Activated CD8-positive, alpha-beta T cell treated with anti-CD3 and anti-CD28 coated beads, Interleukin-2, amount 10 ng/mL, durations not matched to agents 7 days and 5 days (primary cell): ENCODE measurements at regions of chr6 and their contacts with region 1.

Region 1: GRCh38 chr6:391559-392440 is at the start of gene IRF4:
- DNase-seq: peak; percentile 77
- ATAC-seq: peak; percentile 55
- H3K4me3 Mint-ChIP-seq: peak within 1 kb of the TSS; percentile 86
- H3K27ac Mint-ChIP-seq: peak within 1 kb of the TSS; percentile 94
- H3K4me1 Mint-ChIP-seq: peaks cover 51% of the 10 kb centered on the region
- H3K27me3 Mint-ChIP-seq: no peaks in the 10 kb centered on the region
- total RNA-seq, gene IRF4: 91.2 to 95.2 TPM

Region 2: GRCh38 chr6:181049-181654 is 210.6 kb before region 1 on chr6:
- CTCF ChIA-PET with region 1: interaction called, 85 read pairs
- POLR2A ChIA-PET with region 1: interaction called, 10 read pairs
- DNase-seq: no peak
- ATAC-seq: no peak
- H3K4me3 Mint-ChIP-seq: peak overlapping the region; percentile 6
- H3K27ac Mint-ChIP-seq: peak overlapping the region; percentile 78
- H3K4me1 Mint-ChIP-seq: peaks cover 33% of the 10 kb centered on the region
- H3K27me3 Mint-ChIP-seq: peaks cover 3% of the 10 kb centered on the region

Region 3: GRCh38 chr6:291697-292505 is 99.9 kb before region 1 on chr6 and contains the start of gene DUSP22:
- CTCF ChIA-PET with region 1: interaction called, 3 read pairs
- POLR2A ChIA-PET with region 1: interaction called, 29 read pairs
- DNase-seq: peak; percentile 90
- ATAC-seq: peak; percentile 75
- H3K4me3 Mint-ChIP-seq: peak within 1 kb of the TSS; percentile 86
- H3K27ac Mint-ChIP-seq: peak within 1 kb of the TSS; percentile 97
- H3K4me1 Mint-ChIP-seq: peaks cover 67% of the 10 kb centered on the region
- H3K27me3 Mint-ChIP-seq: no peaks in the 10 kb centered on the region
- total RNA-seq, gene DUSP22: 32.6 to 33.2 TPM

Region 4: GRCh38 chr6:436308-437036 is 44.7 kb after region 1 on chr6:
- CTCF ChIA-PET with region 1: interaction called, 8 read pairs
- POLR2A ChIA-PET with region 1: interaction called, 12 read pairs
- DNase-seq: no peak
- ATAC-seq: no peak
- H3K4me3 Mint-ChIP-seq: no peak overlapping the region
- H3K27ac Mint-ChIP-seq: peak overlapping the region; percentile 39
- H3K4me1 Mint-ChIP-seq: peaks cover 45% of the 10 kb centered on the region
- H3K27me3 Mint-ChIP-seq: peaks cover 2% of the 10 kb centered on the region

Region 5: DNA sequence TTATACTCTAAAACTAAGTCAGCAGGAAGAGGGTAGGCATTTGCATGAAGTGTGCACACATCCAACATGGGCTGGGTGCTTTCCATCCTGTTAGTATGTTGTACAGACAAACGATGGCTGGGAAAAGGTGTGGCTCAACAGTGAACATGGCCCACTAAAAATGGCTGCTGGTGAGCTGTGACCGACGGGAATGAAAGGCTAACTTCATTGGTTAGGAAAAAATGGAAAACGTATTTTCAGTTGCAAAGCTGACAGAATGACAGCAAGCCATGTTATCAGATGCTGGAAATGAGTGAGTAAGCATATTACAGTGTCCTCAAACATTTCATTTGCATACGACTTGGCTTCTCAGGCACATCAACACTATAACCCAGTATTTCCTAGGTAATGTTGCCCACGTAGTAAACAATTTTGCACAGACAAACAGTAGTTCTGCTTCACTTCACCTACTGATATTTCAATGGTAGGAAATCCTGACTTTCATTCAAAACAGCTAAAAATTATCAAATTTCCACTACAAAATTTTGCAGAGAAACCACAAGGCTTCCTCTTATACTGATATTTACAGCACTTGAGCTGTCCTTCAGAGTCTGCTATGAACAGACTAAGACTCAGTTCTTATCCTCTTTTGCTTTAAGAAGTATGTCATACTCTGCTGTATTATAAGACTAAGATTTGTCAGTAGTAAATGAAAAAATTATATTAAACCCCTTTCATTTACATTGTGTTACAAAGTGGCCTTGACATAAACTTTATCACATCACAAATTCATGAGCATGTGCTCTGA is 98.6 kb after region 1 on chr6:
- CTCF ChIA-PET with region 1: interaction called, 20 read pairs
- POLR2A ChIA-PET with region 1: interaction called, 51 read pairs
- DNase-seq: peak; percentile 38
- ATAC-seq: peak; percentile 58
- H3K4me3 Mint-ChIP-seq: peak overlapping the region; percentile 64
- H3K27ac Mint-ChIP-seq: peak overlapping the region; percentile 93
- H3K4me1 Mint-ChIP-seq: peaks cover 76% of the 10 kb centered on the region
- H3K27me3 Mint-ChIP-seq: no peaks in the 10 kb centered on the region

Region 6: DNA sequence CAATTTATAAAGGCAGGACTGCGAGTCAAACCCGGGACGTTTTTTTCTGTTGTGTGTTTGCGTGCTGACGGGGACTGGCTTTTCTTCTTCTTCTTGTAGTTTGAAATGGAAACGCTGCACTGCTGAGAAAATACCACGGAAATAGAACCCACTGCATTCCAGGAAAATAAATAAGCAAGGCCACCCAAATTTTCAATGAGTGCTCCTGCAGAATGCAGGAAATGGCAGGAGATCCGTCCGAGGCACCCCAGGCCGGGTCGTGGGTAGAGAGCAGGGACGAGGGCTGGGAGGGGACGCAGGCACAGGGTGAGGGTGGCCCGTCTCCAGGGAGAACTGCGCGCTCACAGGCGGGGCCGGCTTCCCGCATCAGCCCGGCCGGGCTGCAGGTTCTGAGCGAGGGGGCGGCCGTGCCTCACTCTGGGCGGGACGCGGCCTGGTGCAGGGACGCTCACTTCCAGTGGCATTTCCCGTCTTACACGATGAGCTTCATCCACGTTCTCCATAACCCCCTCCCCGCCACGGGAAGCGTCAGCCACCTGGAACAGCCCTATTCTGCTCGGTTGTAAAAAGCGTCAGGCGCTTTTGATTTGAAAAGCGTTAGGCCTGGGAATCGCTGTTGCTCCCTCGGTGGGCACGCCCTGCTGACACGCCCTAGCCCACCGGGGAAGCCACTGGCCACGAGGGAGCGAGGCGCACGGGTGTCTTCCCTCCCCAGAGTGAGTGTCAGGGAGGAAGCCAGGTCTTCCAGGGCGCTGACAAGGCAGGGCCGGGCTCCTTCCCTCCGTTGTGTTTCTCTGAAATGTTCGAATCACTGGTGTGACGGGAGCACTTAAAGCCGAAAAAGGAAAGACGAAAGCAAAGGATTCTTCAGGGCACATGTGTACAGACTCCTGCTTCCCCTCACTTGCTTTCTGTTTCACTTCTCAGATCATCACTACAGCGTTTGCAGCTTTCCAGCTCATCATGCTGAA is 319.1 kb after region 1 on chr6:
- CTCF ChIA-PET with region 1: no interaction called
- POLR2A ChIA-PET with region 1: interaction called, 13 read pairs
- DNase-seq: peak; percentile 69
- ATAC-seq: peak; percentile 89
- H3K4me3 Mint-ChIP-seq: peak overlapping the region; percentile 92
- H3K27ac Mint-ChIP-seq: peak overlapping the region; percentile 98
- H3K4me1 Mint-ChIP-seq: peaks cover 26% of the 10 kb centered on the region
- H3K27me3 Mint-ChIP-seq: peaks cover 5% of the 10 kb centered on the region